ENCODE measurements at regions of chr9 and their contacts with region 1.

Region 1: DNA sequence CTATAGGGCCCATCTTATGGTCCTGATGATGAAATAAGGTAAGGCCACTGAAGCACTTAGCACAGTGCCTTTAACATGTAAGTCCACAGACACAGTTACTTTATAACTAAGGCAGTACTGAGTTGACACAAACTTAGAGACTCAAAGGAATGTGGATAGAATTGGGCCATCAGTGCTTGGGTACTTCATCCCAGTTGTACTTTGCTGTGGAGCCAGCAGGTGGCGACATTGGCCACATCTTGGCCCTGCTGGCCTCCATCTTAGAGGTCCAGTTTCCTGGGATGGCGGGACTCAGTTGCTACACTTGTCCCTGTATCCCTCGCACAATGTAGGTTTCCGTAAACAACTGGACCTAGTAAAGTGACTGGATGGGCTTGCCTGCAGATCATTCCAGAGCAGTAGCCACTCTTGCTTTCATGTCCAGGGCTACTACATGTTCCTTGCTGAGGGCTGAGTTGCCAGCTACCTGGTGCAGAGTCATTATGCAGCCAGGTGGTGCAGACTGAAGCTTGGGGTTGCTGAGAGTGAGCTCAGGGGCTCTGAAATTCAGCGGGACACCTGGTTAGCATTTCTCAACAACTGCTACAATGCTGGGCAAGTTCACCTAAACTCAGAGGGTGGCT is 10.6 kb downstream of the MTAP start:
- DNase-seq: no peak
- H3K4me3 ChIP-seq: no peak overlapping the region
- CTCF ChIP-seq: peak; percentile 85

Region 2: GRCh38 chr9:21491742-21492141 is 321.3 kb before region 1 on chr9:
- CTCF ChIA-PET with region 1: no interaction called
- POLR2A ChIA-PET with region 1: no interaction called
- DNase-seq: no peak
- H3K4me3 ChIP-seq: no peak overlapping the region
- CTCF ChIP-seq: no peak

Region 3: DNA sequence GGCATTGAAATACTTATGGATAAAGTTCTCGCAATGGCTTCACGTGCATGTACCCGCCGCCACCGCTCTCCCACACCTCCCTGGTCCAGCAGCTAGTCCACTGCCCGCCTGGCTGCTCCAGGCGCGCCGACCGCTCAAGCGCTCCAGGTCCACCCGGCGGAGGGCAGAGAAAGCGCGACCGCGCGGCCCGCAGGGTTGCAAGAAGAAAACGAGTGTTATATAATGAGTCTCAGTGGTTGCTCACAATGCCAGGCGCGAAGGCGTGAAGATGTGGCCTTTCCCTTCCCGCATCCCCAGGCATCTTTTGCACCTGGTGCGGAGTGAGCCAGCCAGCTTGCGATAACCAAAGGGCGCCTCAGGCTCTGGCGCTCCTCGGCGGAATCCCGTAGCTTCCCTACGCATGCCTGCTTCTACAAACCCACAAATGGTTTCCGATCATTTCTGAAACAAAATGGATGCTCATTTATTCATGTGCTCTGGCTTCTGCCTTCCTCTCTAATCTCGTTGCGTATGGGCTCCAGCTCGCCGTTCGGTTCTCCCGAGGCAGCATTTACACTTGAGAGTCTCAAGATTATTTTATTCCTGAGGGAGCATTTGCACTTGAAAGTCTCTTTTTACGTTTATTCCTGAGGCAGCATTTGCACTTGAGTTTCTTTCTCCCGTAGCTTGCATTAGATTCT is 155.4 kb after region 1 on chr9:
- CTCF ChIA-PET with region 1: interaction called, 32 read pairs
- POLR2A ChIA-PET with region 1: no interaction called
- DNase-seq: no peak
- H3K4me3 ChIP-seq: peak overlapping the region; percentile 36
- CTCF ChIP-seq: no peak

Region 4: GRCh38 chr9:22037954-22038690 is 225.1 kb after region 1 on chr9:
- CTCF ChIA-PET with region 1: interaction called, 136 read pairs
- POLR2A ChIA-PET with region 1: no interaction called
- DNase-seq: no peak
- H3K4me3 ChIP-seq: no peak overlapping the region
- CTCF ChIP-seq: peak; percentile 9

Region 5: GRCh38 chr9:22211593-22212360 is 398.7 kb after region 1 on chr9:
- CTCF ChIA-PET with region 1: interaction called, 12 read pairs
- POLR2A ChIA-PET with region 1: no interaction called
- DNase-seq: peak; percentile 71
- H3K4me3 ChIP-seq: no peak overlapping the region
- CTCF ChIP-seq: no peak

Region 6: GRCh38 chr9:22244141-22245011 is 431.3 kb after region 1 on chr9:
- CTCF ChIA-PET with region 1: interaction called, 197 read pairs
- POLR2A ChIA-PET with region 1: no interaction called
- DNase-seq: no peak
- H3K4me3 ChIP-seq: no peak overlapping the region
- CTCF ChIP-seq: peak; percentile 57